ENCODE measurements at regions of chr12 and their contacts with region 1.

Region 1: DNA sequence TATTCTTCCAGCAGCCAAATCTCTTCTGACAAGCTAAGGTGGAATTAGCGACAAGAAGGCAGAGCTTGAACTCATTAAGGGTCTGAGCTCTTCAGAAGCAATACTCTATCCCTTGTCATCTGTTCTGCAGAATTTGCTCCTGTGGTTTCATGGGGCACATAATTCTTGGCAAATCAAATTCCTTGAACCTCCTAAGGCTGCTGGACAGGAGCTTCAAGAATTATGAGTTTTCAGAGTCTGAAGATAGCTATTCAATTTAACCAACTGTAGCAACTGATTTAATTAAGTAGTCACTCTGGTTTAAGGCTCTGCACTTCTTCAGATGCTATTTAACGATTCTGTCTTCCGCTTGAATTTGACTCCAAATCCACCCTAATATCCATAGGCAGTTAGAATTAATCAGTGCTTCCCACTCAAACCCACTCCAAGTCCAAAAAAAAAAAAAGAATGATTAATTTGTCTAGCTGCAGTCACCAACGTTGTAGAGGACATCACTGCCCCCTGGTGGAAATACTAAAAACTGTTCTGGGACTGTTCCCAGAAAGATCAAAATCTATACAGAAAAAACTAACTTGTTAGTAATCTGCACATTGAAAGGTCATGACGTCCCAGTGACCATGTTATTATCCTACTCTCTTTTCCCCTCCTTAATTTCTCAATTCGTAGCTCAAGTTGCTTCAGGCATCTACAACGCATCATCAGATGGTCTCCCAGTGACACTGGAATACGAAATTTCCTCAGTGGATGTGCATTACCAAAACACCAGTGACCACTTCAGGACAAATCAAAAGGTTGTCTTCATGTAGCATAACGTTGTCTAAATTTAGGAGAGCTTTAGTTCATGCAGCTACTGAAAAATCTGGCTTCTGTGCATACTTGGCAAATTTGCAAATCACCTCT is 169.8 kb downstream of the KIF21A start:
- DNase-seq: no peak
- ATAC-seq: no peak
- H3K4me3 ChIP-seq: no peak overlapping the region
- H3K27ac ChIP-seq: no peak overlapping the region
- H3K4me1 ChIP-seq: no peaks in the 10 kb centered on the region
- H3K27me3 ChIP-seq: no peaks in the 10 kb centered on the region
- CTCF ChIP-seq: peak; percentile 51 to 79 (median 66)
- POLR2A ChIP-seq: no peak

Region 2: DNA sequence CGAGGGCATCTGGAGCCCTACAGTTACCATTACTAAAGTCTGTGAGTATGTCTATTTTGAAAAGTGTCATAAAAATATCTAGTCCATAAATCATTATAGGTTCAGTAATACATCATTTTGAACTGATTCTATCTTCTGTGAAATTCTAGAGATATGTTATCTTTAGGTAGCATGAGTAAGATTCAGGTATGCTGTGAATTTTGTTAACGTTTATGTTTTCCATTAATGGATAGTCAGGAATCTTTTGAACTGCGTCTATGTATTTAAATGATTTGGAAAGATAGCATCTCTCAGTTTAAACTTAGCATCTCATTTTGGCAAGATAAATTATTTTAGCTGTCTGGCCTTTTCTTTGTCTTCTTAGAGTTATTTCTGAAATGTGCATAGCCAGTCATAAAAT is 948.2 kb before region 1 on chr12:
- intact Hi-C with region 1: loop called in 5 of 10 experiments (anchors 10 kb)
- DNase-seq: no peak
- ATAC-seq: no peak
- H3K4me3 ChIP-seq: no peak overlapping the region
- H3K27ac ChIP-seq: no peak overlapping the region
- H3K4me1 ChIP-seq: no peaks in the 10 kb centered on the region
- H3K27me3 ChIP-seq: no peaks in the 10 kb centered on the region
- CTCF ChIP-seq: no peak
- POLR2A ChIP-seq: no peak

Region 3: GRCh38 chr12:38771871-38772270 is 501.2 kb before region 1 on chr12:
- intact Hi-C with region 1: no loop called
- DNase-seq: no peak
- ATAC-seq: no peak
- H3K4me3 ChIP-seq: peak overlapping the region in 1 of 12 donors; percentile 1
- H3K27ac ChIP-seq: no peak overlapping the region
- H3K4me1 ChIP-seq: peaks cover 0 to 9% (median 0%) of the 10 kb centered on the region in 12 donors
- H3K27me3 ChIP-seq: no peaks in the 10 kb centered on the region
- CTCF ChIP-seq: no peak
- POLR2A ChIP-seq: no peak

Region 4: DNA sequence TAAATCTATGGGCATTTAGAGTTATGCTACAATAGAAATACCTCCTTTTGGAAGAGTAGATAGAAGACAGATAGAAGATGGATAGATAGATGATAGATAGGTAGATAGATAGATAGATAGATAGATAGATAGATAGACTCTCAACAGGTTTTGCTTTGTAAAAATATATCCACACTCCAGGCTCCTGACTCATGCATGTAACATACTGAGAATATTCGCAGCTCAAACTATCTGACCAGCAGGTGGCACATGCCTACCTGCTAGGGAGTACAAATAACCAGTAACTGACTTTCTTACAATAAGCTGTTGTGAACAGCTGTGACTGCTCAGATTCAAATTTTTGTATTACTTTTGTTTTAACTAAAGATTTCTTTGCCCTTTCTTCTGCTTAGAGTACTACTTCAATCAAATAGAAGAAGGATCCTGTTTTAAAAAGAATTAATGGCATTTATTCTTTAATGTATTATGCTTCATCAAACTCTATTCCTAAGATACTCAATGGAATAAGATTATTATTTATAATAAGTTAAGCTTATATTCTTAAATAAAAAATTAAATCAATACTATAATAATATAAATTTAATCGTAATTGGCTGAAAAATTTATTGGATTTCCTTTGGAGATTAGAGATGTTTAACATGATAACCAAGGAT is 352.0 kb before region 1 on chr12:
- intact Hi-C with region 1: loop called in 3 of 10 experiments (anchors 10 kb)
- DNase-seq: peak in 4 of 5 donors; percentile 12 to 49 (median 32)
- ATAC-seq: peak in 3 of 4 donors; percentile 53 to 65 (median 64)
- H3K4me3 ChIP-seq: no peak overlapping the region
- H3K27ac ChIP-seq: no peak overlapping the region
- H3K4me1 ChIP-seq: no peaks in the 10 kb centered on the region
- H3K27me3 ChIP-seq: no peaks in the 10 kb centered on the region
- CTCF ChIP-seq: peak; percentile 31 to 70 (median 54)
- POLR2A ChIP-seq: no peak

Region 5: DNA sequence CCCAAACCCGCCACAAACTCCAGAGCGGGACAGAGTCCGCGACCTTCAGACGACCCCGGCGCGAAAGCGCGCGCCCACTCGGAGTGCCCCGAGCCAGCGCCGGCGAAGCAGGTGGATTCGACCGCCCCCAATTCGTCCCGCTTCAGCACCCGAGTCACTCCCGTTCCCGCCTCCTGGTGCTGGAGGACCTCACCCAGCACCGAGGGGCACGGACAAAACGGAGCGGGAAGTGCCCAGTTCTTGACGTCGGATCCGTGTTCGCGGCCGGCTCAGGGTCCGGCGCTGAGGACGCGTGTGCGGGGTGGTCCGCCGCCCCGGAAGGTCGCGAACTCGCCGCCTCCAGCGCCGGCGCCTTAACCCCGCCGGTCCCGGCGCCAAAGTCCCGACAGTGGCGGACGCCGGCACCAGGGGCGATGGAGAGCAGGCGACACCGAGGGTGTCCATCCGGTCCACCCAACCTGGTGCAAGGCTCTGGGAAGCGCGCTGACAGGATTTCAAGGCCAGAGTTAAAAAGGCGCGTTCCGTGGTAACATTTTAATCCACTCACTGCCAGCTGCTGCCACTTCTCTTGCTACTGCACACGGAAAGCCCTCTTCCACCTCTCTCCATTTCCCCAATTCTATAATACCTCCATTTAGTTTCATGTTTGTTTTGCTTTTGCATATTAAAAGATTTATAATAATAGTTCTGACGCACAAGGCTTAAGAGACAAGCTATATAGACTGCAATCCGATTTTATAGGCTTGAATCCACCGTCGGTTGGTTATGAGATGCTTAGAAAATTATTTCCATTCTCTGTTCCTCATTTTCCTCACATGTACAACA is 127.7 kb before region 1 on chr12:
- intact Hi-C with region 1: loop called in 5 of 10 experiments (anchors 2 to 10 kb)
- DNase-seq: peak; percentile 12 to 72 (median 43)
- ATAC-seq: peak in 1 of 4 donors; percentile 99
- H3K4me3 ChIP-seq: peak overlapping the region; percentile 24 to 60 (median 52)
- H3K27ac ChIP-seq: peak overlapping the region in 1 of 12 donors; percentile 4
- H3K4me1 ChIP-seq: peaks cover 0 to 13% (median 3%) of the 10 kb centered on the region in 12 donors
- H3K27me3 ChIP-seq: peaks cover 0 to 44% (median 17%) of the 10 kb centered on the region in 9 donors
- CTCF ChIP-seq: peak in 11 of 12 donors; percentile 21 to 82 (median 61)
- POLR2A ChIP-seq: no peak

Region 6: DNA sequence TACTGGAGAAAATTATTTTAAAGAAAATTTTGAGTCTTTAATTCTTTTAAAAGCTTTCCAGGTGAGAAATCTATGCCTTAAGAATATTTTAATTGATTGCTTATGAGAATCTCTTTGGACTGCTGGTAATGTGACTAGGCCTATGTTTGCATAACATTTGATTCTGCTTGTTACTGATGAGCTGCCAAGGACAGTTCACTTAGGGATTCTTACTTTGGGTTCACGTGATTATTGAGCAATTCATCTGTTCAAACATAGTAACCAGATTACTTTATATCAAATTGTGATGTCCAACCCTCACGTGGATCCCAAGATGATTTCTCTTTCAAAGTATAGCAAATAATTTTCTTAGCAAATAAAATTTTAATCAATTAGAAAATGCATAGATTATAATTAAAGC is 373.8 kb after region 1 on chr12:
- intact Hi-C with region 1: no loop called
- DNase-seq: no peak
- ATAC-seq: no peak
- H3K4me3 ChIP-seq: no peak overlapping the region
- H3K27ac ChIP-seq: no peak overlapping the region
- H3K4me1 ChIP-seq: peaks cover 0 to 4% (median 0%) of the 10 kb centered on the region in 12 donors
- H3K27me3 ChIP-seq: no peaks in the 10 kb centered on the region
- CTCF ChIP-seq: no peak
- POLR2A ChIP-seq: no peak

Measured in heart left ventricle (tissue), 16 donors.